Naive thymus-derived CD8-positive, alpha-beta T cell (primary cell): ENCODE measurements at regions of chr7 and their contacts with region 1.

Region 1: DNA sequence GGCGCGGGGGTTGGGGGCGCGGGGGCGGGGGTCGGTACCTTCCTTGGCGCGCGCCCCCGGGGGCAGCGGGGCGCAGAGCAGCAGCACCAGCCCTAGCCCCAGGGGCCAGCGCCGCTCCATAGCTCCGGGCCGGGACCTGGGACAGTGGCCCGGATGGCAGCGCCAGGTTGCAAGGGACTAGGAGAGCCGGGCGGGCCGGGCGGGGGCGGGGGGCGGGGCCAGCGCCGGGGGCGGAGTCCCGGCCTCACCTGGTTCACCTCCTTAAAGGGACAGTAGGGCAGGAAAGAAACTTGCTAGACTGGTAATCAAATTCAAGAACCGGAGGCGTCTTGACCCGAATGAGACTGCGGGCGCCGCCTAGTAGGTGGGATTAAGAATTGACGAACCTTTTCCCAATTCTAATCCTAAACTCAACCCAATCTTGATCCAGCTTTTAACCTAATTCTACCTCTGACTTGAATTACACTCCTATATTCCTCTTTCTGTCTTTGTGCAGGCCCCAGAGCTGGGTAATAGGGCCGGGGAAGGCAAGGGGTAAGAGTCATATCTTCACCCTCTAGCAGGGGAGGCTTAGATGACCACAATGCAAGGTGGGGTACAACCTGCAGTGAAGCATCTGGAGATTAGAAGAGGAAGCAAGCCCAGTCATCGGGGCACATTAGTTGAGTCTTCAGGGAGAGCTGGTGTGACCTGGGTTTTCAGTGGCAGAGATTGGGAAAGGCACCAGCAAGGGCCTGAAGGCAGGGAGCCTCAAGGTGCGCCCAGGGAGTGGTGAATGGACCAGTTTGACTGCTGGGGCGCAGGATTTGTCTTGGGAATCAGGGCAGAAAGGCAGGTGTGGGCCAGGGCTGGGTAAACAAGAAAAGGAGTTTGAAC is at the start of gene EPHA1:
- DNase-seq: peak; percentile 34 to 78 (median 56)
- ATAC-seq: peak; percentile 73 to 78
- H3K4me3 Mint-ChIP-seq: peak within 1 kb of the TSS; percentile 93 to 99 (median 94)
- H3K27ac Mint-ChIP-seq: peak within 1 kb of the TSS; percentile 89 to 99 (median 95)
- H3K4me1 Mint-ChIP-seq: peaks cover 59 to 88% (median 80%) of the 10 kb centered on the region in 4 donors
- H3K27me3 Mint-ChIP-seq: peaks cover 0 to 11% (median 0%) of the 10 kb centered on the region in 5 donors
- polyA plus RNA-seq, gene EPHA1: 10.1 to 37.1 (median 16.2) TPM

Region 2: GRCh38 chr7:143240291-143241168 is 168.4 kb before region 1 on chr7:
- POLR2A ChIA-PET with region 1: interaction called, 10 read pairs
- DNase-seq: peak; percentile 25 to 84 (median 73)
- ATAC-seq: peak; percentile 96 to 97
- H3K4me3 Mint-ChIP-seq: peak overlapping the region in 2 of 10 donors; percentile 14 to 24
- H3K27ac Mint-ChIP-seq: peak overlapping the region in 3 of 10 donors; percentile 46 to 66 (median 49)
- H3K4me1 Mint-ChIP-seq: peaks cover 13 to 35% (median 24%) of the 10 kb centered on the region in 4 donors
- H3K27me3 Mint-ChIP-seq: peaks cover 0 to 7% (median 2%) of the 10 kb centered on the region in 5 donors

Region 3: GRCh38 chr7:143263266-143264195 is 145.4 kb before region 1 on chr7 and contains the start of gene GSTK1:
- POLR2A ChIA-PET with region 1: interaction called, 13 read pairs
- DNase-seq: peak; percentile 63 to 87 (median 72)
- ATAC-seq: peak; percentile 97
- H3K4me3 Mint-ChIP-seq: peak within 1 kb of the TSS; percentile 92 to 99 (median 96)
- H3K27ac Mint-ChIP-seq: peak within 1 kb of the TSS; percentile 94 to 97 (median 96)
- H3K4me1 Mint-ChIP-seq: peaks cover 36 to 70% (median 65%) of the 10 kb centered on the region in 4 donors
- H3K27me3 Mint-ChIP-seq: no peaks in the 10 kb centered on the region
- polyA plus RNA-seq, gene GSTK1: 310 to 355 (median 330) TPM

Region 4: GRCh38 chr7:143372070-143372469 is 36.9 kb before region 1 on chr7:
- POLR2A ChIA-PET with region 1: interaction called, 44 read pairs
- DNase-seq: peak in 9 of 10 donors; percentile 37 to 81 (median 59)
- ATAC-seq: peak; percentile 58 to 69
- H3K4me3 Mint-ChIP-seq: peak overlapping the region; percentile 2 to 83 (median 42)
- H3K27ac Mint-ChIP-seq: peak overlapping the region; percentile 38 to 94 (median 76)
- H3K4me1 Mint-ChIP-seq: peaks cover 45 to 66% (median 57%) of the 10 kb centered on the region in 4 donors
- H3K27me3 Mint-ChIP-seq: no peaks in the 10 kb centered on the region

Region 5: GRCh38 chr7:143385891-143386781 is 22.8 kb before region 1 on chr7:
- POLR2A ChIA-PET with region 1: interaction called, 184 read pairs
- DNase-seq: peak in 7 of 10 donors; percentile 26 to 66 (median 57)
- ATAC-seq: peak; percentile 42 to 58
- H3K4me3 Mint-ChIP-seq: no peak overlapping the region
- H3K27ac Mint-ChIP-seq: no peak overlapping the region
- H3K4me1 Mint-ChIP-seq: peaks cover 9 to 26% (median 18%) of the 10 kb centered on the region in 4 donors
- H3K27me3 Mint-ChIP-seq: no peaks in the 10 kb centered on the region

Region 6: DNA sequence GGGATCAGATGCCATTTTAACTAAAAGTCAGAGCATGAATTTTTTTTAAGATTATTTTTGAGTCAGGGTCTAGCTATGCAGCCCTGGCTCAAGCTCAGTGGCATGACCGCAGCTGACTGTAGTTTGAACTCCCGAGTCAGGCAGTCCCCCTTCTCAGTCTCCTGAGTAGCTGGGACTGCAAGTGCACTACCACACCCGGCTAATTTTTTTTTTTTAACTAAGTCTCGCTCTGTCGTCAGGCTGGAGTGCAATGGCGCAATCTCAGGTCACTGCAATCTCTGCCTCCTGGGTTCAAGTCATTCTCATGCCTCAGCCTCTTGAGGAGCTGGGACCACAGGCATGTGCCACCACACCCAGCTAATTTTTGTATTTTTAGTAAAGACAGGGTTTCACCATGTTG is 76.6 kb after region 1 on chr7:
- POLR2A ChIA-PET with region 1: no interaction called
- DNase-seq: no peak
- ATAC-seq: no peak
- H3K4me3 Mint-ChIP-seq: no peak overlapping the region
- H3K27ac Mint-ChIP-seq: peak overlapping the region in 1 of 10 donors; percentile 23
- H3K4me1 Mint-ChIP-seq: peaks cover 9 to 22% (median 17%) of the 10 kb centered on the region in 4 donors
- H3K27me3 Mint-ChIP-seq: no peaks in the 10 kb centered on the region